ENCODE measurements at regions of chr6 and their contacts with region 1.

Region 1: GRCh38 chr6:28673800-28674671 is 148.4 kb downstream of the GPX5 start:
- DNase-seq: peak; percentile 83
- H3K4me3 ChIP-seq: peak overlapping the region; percentile 40 to 69 (median 66)
- H3K27ac ChIP-seq: no peak overlapping the region
- H3K4me1 ChIP-seq: peaks cover 10% of the 10 kb centered on the region
- H3K27me3 ChIP-seq: no peaks in the 10 kb centered on the region
- CTCF ChIP-seq: no peak

Region 2: DNA sequence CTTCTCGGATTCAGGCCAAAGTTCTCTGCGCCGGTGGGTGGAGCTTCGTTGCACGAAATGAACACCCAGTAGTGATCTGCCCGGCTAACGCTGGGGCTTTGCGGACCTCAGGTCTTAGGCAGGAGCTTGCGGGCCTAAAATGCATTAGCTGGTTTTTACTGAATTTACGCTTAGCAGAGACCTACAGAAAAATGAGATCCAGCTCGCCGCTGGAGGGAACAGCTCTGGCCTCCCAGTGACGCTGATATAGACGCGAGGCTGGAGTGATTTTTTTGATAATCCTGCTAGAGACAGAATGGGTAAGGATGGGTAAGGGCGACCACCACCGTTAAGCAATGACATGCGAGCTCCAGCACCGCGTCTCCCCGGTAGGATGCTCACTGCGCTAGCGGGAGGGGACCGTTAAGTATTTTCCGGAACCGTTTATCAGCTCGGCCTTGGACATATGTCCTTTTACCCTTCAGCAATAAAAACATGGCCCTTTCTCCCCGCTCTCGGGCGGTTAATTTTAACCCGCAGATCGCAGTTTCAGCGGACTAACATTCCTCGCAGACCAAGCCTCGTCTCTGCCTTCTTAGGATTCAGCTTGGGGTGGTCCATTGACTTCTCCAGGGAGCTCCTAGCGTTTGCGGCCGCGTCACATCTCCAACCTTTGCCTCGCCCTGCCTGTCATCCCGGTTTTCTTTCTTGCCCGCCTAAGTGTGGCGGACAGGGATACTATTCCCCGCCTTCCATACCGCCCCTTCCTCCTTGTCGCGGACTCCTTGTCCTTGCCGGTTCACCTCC is 39.1 kb before region 1 on chr6:
- CTCF ChIA-PET with region 1: no interaction called
- dilution Hi-C with region 1: loop called (anchors 5 kb)
- in situ Hi-C with region 1: no loop called
- intact Hi-C with region 1: no loop called
- DNase-seq: peak; percentile 9
- H3K4me3 ChIP-seq: peak overlapping the region; percentile 10 to 40 (median 36)
- H3K27ac ChIP-seq: no peak overlapping the region
- H3K4me1 ChIP-seq: no peaks in the 10 kb centered on the region
- H3K27me3 ChIP-seq: peaks cover 9% of the 10 kb centered on the region
- CTCF ChIP-seq: no peak

Region 3: DNA sequence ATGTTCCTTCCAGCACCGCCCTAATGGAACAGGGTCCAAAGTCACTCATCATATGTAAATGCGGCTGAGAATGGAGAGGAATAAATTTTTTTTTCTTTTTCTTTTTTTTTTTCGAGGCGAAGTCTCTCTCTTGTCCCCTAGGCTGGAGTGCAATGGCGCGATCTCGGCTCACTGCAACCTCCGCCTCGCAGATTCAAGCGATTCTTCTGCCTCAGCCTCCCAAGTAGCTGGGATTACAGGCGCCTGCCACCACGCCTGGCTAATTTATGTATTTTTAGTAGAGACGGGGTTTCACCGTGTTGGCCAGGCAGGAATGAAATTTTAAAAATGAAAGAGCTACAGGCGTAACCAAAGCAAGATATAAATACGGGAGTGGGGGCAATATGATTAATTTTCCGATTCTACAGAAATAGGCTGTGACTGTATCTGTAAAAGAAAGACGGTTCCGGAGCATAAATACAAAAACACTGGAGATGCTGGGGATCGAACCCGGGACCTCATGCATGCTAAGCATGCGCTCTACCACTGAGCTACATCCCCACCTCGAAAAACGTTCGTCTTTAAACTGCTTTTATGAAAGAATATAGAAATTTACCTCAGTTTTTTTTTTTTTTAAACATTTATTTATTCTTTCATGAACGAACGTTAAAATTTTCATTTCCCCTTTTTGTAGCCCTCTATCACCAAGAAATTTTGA is 16.1 kb before region 1 on chr6:
- CTCF ChIA-PET with region 1: no interaction called
- dilution Hi-C with region 1: no loop called
- in situ Hi-C with region 1: no loop called
- intact Hi-C with region 1: loop called (anchors 2 kb)
- DNase-seq: peak; percentile 44
- H3K4me3 ChIP-seq: peak overlapping the region; percentile 42 to 92 (median 49)
- H3K27ac ChIP-seq: no peak overlapping the region
- H3K4me1 ChIP-seq: peaks cover 10% of the 10 kb centered on the region
- H3K27me3 ChIP-seq: peaks cover 6% of the 10 kb centered on the region
- CTCF ChIP-seq: no peak

Region 4: GRCh38 chr6:28710466-28711191 is 36.6 kb after region 1 on chr6:
- CTCF ChIA-PET with region 1: no interaction called
- dilution Hi-C with region 1: no loop called
- in situ Hi-C with region 1: no loop called
- intact Hi-C with region 1: no loop called
- DNase-seq: peak; percentile 67
- H3K4me3 ChIP-seq: no peak overlapping the region
- H3K27ac ChIP-seq: no peak overlapping the region
- H3K4me1 ChIP-seq: peaks cover 4% of the 10 kb centered on the region
- H3K27me3 ChIP-seq: no peaks in the 10 kb centered on the region
- CTCF ChIP-seq: no peak

Measured in mammary epithelial cell (primary cell).